Thyroid gland (tissue), 4 donors: ENCODE measurements at regions of chr5 and their contacts with region 1.

Region 1: DNA sequence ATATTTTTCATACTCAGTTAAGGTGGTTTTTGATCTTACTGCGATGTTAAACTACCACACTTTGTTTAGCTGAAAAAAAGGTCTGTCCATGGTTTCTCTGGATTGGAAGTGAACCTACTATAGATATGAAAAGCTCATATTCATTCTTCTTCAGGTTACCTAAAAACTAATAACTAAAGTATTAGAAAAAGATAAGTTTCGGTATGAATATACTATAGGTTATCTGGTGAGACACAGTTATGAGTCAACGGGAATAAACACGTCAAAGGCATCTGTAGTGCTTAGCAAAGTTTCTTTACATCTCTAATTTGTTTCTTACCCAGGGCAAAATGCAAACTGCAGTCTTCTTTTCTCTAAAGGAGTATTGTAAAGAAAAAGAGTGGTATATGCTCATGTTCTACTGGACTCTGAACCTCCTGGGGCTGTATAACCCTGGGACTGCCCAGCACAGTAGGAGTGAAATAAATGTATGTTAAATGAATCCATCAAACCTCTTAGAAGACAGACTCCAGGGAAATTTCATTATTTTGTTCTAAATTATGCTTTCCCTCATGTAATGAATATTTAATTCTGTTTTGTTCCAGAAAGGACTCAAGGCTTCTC is 521.9 kb downstream of the PDE4D start:
- DNase-seq: no peak
- H3K4me3 ChIP-seq: no peak overlapping the region
- H3K27ac ChIP-seq: no peak overlapping the region
- H3K4me1 ChIP-seq: no peaks in the 10 kb centered on the region
- H3K27me3 ChIP-seq: no peaks in the 10 kb centered on the region
- CTCF ChIP-seq: no peak
- POLR2A ChIP-seq: no peak

Region 2: GRCh38 chr5:58886315-58887207 is 485.1 kb before region 1 on chr5:
- intact Hi-C with region 1: loop called (anchors 10 kb)
- DNase-seq: peak; percentile 45 to 62
- H3K4me3 ChIP-seq: no peak overlapping the region
- H3K27ac ChIP-seq: peak overlapping the region in 1 of 3 donors; percentile 34
- H3K4me1 ChIP-seq: peaks cover 3 to 5% of the 10 kb centered on the region in 2 donors
- H3K27me3 ChIP-seq: no peaks in the 10 kb centered on the region
- CTCF ChIP-seq: peak; percentile 66 to 95 (median 74)
- POLR2A ChIP-seq: no peak

Region 3: GRCh38 chr5:59079622-59080620 is 291.7 kb before region 1 on chr5:
- intact Hi-C with region 1: no loop called
- DNase-seq: no peak
- H3K4me3 ChIP-seq: no peak overlapping the region
- H3K27ac ChIP-seq: no peak overlapping the region
- H3K4me1 ChIP-seq: no peaks in the 10 kb centered on the region
- H3K27me3 ChIP-seq: no peaks in the 10 kb centered on the region
- CTCF ChIP-seq: no peak
- POLR2A ChIP-seq: no peak

Region 4: GRCh38 chr5:59188419-59189225 is 183.0 kb before region 1 on chr5:
- intact Hi-C with region 1: loop called (anchors 5 kb)
- DNase-seq: peak; percentile 60 to 68
- H3K4me3 ChIP-seq: no peak overlapping the region
- H3K27ac ChIP-seq: no peak overlapping the region
- H3K4me1 ChIP-seq: no peaks in the 10 kb centered on the region
- H3K27me3 ChIP-seq: no peaks in the 10 kb centered on the region
- CTCF ChIP-seq: peak; percentile 53 to 87 (median 71)
- POLR2A ChIP-seq: no peak